ENCODE measurements at regions of chr9 and their contacts with region 1.

Region 1: DNA sequence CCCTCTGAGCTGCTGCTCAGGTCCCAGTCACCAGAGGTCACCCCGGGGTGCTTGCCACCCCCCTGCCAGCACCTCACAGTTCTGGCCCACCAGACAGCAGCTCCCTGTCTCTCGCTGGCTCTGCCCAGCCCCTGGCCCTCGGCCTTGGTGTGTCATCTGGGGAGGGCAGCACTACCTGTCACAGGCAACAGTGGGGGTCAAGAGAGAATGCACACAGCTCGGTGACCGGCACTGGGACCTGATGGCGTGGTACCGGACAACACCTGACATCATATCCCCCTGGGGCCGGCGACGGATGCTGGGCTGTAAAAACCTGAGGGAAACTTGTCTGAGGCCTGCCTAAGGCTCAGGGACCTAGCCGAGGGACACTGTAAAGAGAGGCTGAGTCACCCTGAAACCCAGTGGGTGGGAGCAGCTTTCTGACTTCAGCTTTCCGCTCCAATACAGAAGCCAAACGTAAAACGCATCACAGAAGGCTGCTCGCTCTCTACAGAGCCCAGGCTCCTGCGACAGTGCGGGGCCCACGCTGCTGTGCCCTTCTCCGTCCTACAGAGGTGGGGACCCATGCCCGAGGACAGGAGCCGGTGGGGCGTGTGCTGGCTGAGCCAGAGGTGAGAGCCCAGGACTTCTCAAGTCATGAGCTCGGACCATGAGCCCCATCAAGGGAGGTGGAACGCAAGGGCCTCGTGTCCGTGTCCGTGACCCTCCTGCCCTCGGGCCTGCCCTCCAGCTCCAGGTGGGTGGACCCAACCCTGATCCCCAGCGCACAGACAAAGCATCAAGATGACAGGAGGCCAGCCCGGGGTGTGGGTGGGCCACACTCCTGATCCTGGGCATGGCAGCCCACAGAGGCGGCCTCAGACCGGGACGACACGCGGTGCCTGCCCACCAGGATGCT is 5.3 kb downstream of the RALGDS start:
- DNase-seq: peak; percentile 79
- ATAC-seq: peak; percentile 88
- H3K4me3 ChIP-seq: peak overlapping the region; percentile 63; the same call in 1 of the 2 replicates
- H3K27ac ChIP-seq: peak overlapping the region; percentile 88
- H3K4me1 ChIP-seq: peaks cover 67% of the 10 kb centered on the region
- H3K27me3 ChIP-seq: no peaks in the 10 kb centered on the region
- CTCF ChIP-seq: no peak
- EP300 ChIP-seq: peak in 1 of 2 experiments; percentile 2; a peak in 1 of 4 replicates
- POLR2A ChIP-seq: no peak
- RAD21 ChIP-seq: no peak

Region 2: DNA sequence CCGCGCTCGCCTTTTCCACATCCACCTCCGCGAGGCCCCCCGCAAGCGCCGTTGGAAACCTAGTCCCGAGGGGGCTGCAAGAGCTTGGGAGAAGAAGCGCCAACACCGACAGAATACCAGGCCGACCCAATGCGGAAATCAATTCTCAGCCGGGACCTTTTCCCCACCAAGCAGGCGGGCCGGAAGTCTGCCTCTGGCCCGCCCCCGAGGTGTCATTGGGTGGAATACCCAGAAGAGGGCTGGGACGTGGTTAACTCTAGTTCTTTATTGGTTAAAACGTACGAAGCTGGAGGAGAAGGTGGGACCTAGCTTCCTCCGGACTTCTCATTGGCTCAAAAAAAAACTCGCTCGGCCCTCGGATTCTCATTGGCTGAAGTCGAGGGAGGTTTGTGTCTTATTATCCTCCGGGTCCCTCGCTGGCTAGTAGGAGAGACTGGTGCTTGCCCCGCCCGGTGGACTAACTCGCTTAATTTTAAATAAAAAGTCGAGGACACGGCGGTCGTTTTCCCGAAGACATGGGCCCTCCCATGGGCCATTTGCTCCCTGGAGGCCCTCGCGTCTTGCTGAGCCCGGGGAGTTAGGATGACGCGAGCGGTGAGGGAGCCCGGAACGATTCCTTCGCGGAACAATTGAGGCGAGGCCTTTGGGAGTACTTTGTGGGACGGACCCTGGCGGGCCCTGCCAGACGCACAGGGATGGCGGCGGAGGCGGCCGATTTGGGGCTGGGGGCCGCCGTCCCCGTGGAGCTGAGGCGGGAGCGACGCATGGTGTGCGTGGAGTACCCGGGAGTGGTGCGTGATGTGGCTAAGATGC is 85.2 kb before region 1 on chr9 and contains the start of gene GTF3C5:
- CTCF ChIA-PET with region 1: interaction called, 5 read pairs
- POLR2A ChIA-PET with region 1: interaction called, 17 read pairs
- RAD21 ChIA-PET with region 1: interaction called, 3 read pairs
- SMC1A ChIA-PET with region 1: no interaction called
- in situ Hi-C with region 1: no loop called
- intact Hi-C with region 1: no loop called
- DNase-seq: peak; percentile 97
- ATAC-seq: peak; percentile 99
- H3K4me3 ChIP-seq: peak within 1 kb of the TSS; percentile 77
- H3K27ac ChIP-seq: peak within 1 kb of the TSS; percentile 91
- H3K4me1 ChIP-seq: peaks cover 13% of the 10 kb centered on the region
- H3K27me3 ChIP-seq: no peaks in the 10 kb centered on the region
- CTCF ChIP-seq: no peak
- EP300 ChIP-seq: peak in 1 of 2 experiments; percentile 35; a peak in 1 of 4 replicates
- POLR2A ChIP-seq: peak; percentile 95
- RAD21 ChIP-seq: no peak
- polyA plus RNA-seq, gene GTF3C5: 2.2 to 6.9 TPM

Region 3: DNA sequence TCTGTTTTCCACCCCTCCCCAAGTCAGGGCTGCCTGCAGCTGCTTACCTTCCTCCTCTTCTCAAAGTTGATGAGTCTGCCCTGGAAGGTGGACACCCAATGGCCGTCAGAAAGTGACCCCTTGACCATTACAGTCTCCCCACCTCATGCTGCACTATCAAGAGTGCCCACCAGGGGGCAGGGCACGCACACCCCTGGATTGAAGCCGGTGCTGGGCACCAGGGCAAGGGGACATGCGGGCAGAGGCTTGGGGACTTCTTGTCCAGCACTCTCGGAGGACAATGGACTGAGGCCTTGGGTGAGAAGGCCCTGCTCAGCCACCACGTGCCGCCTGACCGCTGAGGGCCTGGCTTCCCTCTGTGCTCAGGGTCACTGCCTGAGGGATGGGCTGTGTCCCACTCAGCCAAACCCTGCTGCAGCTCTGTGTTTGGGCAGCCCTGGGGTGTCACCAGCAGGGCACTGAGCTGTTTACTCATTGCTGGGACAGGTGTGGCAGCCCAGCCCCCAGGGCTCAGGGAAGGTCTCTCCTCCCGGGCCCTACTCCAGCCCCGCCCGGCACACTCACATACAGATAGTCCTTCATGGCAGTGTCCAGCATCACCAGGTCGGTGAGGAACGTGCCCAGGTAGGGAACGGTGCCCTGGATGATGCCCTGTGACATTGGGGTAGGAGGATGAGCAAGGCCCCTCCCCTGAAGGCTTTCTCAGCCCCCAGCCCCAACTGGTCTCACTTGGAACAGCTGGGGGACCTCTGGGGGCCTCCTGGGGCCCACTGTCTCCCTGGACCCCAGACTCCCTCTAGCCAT is 12.3 kb before region 1 on chr9:
- CTCF ChIA-PET with region 1: interaction called, 29 read pairs
- POLR2A ChIA-PET with region 1: interaction called, 3 read pairs
- RAD21 ChIA-PET with region 1: interaction called, 3 read pairs
- SMC1A ChIA-PET with region 1: interaction called, 6 read pairs
- in situ Hi-C with region 1: no loop called
- intact Hi-C with region 1: no loop called
- DNase-seq: no peak
- ATAC-seq: peak; percentile 88
- H3K4me3 ChIP-seq: no peak overlapping the region
- H3K27ac ChIP-seq: no peak overlapping the region
- H3K4me1 ChIP-seq: no peaks in the 10 kb centered on the region
- H3K27me3 ChIP-seq: no peaks in the 10 kb centered on the region
- CTCF ChIP-seq: peak; percentile 94 to 96 (median 95)
- EP300 ChIP-seq: no peak
- POLR2A ChIP-seq: no peak; the same call in 1 of the 2 replicates
- RAD21 ChIP-seq: peak; percentile 95

Region 4: DNA sequence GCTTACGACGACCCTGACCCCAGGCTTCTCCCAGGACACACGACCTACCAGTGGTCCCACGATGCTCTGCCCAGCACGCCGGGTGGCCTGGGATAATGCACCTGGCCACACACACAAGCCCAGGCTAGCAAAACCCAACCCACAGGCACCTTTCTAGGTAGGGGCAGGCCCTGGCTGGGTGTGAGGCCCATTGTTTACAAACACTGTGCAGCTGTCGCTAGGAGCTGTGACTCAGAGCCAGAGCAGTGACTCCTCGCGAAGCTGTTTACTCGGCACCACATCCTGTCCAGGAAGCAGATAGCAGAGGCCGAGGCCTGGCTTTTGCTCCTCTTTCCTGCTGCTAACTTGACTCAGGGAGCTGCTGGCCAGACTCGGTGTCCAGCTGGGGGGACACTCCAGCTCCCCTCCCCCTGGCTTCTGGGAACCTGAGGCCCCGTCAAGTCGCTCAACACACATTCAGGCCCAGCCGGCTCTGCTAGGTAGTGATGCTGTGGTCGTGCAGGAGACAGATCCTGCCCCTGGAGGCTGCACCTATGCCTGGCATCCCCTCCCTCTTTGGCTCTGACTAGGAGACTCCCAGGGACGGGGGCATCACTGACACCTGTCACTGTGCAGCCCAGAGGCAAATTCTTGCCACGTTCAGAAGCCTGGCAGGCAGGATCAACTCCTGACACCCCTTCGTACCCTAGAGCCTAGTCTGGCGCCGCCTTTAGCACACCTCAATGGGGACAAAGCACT is 18.2 kb after region 1 on chr9:
- CTCF ChIA-PET with region 1: interaction called, 9 read pairs
- POLR2A ChIA-PET with region 1: interaction called, 26 read pairs
- RAD21 ChIA-PET with region 1: interaction called, 24 read pairs
- SMC1A ChIA-PET with region 1: interaction called, 11 read pairs
- in situ Hi-C with region 1: no loop called
- intact Hi-C with region 1: no loop called
- DNase-seq: no peak
- ATAC-seq: peak; percentile 93
- H3K4me3 ChIP-seq: no peak overlapping the region
- H3K27ac ChIP-seq: peak overlapping the region; percentile 88
- H3K4me1 ChIP-seq: peaks cover 39% of the 10 kb centered on the region
- H3K27me3 ChIP-seq: no peaks in the 10 kb centered on the region
- CTCF ChIP-seq: peak in 1 of 3 experiments; percentile 5; a peak in 1 of 6 replicates
- EP300 ChIP-seq: peak; percentile 88 to 98
- POLR2A ChIP-seq: peak; percentile 70
- RAD21 ChIP-seq: no peak

Region 5: DNA sequence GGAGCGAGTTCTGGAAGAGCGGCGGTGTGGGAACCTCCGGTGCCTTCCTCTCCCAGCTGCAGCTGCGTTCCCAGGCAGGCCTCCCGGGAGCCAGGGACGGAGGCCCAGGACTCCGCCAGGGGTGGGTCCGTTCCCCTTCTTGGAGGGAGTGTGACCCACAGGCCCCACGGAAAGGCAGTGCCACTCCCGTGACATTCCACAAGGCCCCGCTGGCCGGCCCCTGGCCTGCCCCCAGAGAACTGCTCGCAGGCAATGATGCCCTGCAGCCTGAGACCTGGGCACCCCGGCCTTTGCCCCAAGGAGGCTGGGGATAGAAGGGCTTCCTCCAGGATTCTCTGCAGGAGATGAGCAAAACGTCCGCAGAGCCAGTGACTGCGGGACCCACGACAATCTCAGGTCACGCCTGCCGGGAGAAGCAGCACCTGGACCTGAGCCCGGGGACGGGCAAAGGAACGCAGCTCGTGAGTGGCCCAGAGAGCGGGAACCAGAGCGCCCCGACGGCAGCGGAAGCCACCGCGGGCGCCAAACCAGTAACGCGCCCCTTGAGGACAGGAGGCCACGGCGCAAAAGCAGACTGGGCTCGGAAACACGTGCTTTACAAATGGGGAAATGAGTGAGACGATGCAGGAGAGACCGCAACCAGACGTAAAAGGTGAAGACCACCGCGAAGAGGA is 84.1 kb after region 1 on chr9:
- CTCF ChIA-PET with region 1: no interaction called
- POLR2A ChIA-PET with region 1: no interaction called
- RAD21 ChIA-PET with region 1: no interaction called
- SMC1A ChIA-PET with region 1: no interaction called
- in situ Hi-C with region 1: no loop called
- intact Hi-C with region 1: no loop called
- DNase-seq: no peak
- ATAC-seq: no peak
- H3K4me3 ChIP-seq: no peak overlapping the region
- H3K27ac ChIP-seq: no peak overlapping the region
- H3K4me1 ChIP-seq: no peaks in the 10 kb centered on the region
- H3K27me3 ChIP-seq: no peaks in the 10 kb centered on the region
- CTCF ChIP-seq: no peak
- EP300 ChIP-seq: no peak
- POLR2A ChIP-seq: no peak
- RAD21 ChIP-seq: no peak